HEK293T (cell line): ENCODE measurements at regions of chr2 and their contacts with region 1.

Region 1: GRCh38 chr2:173402405-173402974 is 47.8 kb downstream of the CDCA7 start:
- DNase-seq: peak; percentile 84

Region 2: GRCh38 chr2:173571021-173571882 is 168.8 kb after region 1 on chr2:
- CTCF ChIA-PET with region 1: interaction called, 42 read pairs
- POLR2A ChIA-PET with region 1: interaction called, 5 read pairs
- DNase-seq: peak; percentile 37